A549 (cell line): ENCODE measurements at regions of chr12 and their contacts with region 1.

Region 1: DNA sequence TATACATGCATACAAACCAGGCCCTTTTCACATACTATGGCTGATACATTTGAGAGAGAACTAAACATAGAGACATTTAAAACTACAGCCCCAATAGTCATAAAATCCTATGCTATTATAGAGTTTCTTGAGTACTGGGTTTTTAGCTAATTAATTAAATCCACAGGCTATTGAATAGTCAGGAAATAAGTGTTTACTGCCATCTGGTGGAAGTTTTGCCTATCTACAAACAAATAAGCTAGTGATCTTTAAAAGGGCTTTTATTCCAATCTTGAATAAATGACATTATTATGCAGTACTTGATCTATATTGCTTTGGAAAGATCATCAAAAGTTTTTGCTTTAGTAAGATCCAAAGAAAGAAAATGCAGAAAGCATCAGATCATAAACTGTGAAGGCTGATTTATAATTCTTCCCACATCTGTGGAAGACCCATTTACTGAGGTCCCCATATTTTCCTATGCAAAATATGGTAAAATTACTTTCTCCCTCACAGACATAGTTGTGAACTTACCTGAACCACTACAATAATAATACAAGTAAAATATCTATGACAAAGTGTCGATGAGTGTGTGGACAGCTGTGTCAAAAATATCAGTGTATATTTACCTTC is 131.3 kb downstream of the ITPR2 start:
- DNase-seq: peak; percentile 16 to 58
- ATAC-seq: peak; percentile 39 to 72; a peak in 3 of 6 replicates
- H3K4me3 ChIP-seq: no peak overlapping the region
- H3K27ac ChIP-seq: no peak overlapping the region
- H3K4me1 ChIP-seq: peaks cover 24% of the 10 kb centered on the region
- CTCF ChIP-seq: peak; percentile 86
- EP300 ChIP-seq: no peak
- POLR2A ChIP-seq: no peak
- RAD21 ChIP-seq: peak; percentile 79 to 88

Region 2: GRCh38 chr12:26691234-26691970 is 10.3 kb before region 1 on chr12:
- CTCF ChIA-PET with region 1: interaction called, 18 read pairs
- POLR2A ChIA-PET with region 1: no interaction called
- DNase-seq: peak; percentile 64 to 84
- ATAC-seq: peak; percentile 98
- H3K4me3 ChIP-seq: no peak overlapping the region
- H3K27ac ChIP-seq: peak overlapping the region; percentile 57 to 77
- H3K4me1 ChIP-seq: peaks cover 19% of the 10 kb centered on the region
- CTCF ChIP-seq: no peak
- EP300 ChIP-seq: no peak
- POLR2A ChIP-seq: no peak
- RAD21 ChIP-seq: no peak